K562 (cell line): ENCODE measurements at regions of chr1 and their contacts with region 1.

Region 1: DNA sequence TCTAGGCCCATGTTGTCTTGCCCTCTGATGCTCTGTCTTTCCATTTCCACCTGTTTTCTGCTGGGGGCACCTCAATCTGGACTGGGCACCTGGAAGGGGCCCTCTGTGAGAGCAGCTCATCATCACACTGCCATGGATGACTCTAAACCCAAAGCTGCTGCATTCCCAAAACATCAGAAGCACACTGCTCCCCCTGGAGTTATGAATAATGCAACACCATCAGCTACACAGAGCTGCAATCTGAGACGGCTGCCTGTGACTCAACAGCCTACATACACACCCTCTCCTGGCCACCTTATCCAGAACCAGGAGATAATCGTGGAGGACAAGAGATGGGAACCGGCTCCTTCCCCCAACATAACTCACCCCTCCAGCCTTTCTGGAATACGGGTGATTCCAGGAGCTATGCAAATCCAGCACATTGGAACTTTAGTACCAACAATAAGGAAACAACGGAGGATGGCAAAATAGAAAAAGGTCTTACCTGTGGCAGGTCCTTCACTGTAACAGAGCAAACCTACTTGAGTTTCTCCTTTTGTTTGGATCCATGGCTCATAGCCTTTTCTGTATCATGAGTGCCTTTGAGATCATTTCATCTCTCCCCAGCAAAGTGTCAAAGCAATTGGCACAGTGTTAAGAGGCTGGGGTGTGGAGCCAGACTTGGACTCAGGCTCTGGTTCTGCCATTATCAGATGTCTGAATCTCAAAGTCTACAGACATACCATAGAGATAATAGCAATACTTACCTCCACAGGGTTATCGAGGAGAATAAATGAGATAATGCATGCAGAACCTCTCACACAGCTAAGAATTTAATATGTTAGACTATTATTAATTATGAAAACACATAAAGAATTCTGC is 29.3 kb downstream of the AK2 start:
- DNase-seq: peak; percentile 38 to 69 (median 48)
- ATAC-seq: peak; percentile 70
- H3K4me3 ChIP-seq: no peak overlapping the region
- H3K27ac ChIP-seq: no peak overlapping the region
- H3K4me1 ChIP-seq: peaks cover 7 to 75% of the 10 kb centered on the region in 2 experiments
- H3K27me3 ChIP-seq: no peaks in the 10 kb centered on the region
- CTCF ChIP-seq: peak; percentile 56 to 66 (median 66)
- EP300 ChIP-seq: no peak
- POLR2A ChIP-seq: no peak
- RAD21 ChIP-seq: peak; percentile 60 to 64

Region 2: DNA sequence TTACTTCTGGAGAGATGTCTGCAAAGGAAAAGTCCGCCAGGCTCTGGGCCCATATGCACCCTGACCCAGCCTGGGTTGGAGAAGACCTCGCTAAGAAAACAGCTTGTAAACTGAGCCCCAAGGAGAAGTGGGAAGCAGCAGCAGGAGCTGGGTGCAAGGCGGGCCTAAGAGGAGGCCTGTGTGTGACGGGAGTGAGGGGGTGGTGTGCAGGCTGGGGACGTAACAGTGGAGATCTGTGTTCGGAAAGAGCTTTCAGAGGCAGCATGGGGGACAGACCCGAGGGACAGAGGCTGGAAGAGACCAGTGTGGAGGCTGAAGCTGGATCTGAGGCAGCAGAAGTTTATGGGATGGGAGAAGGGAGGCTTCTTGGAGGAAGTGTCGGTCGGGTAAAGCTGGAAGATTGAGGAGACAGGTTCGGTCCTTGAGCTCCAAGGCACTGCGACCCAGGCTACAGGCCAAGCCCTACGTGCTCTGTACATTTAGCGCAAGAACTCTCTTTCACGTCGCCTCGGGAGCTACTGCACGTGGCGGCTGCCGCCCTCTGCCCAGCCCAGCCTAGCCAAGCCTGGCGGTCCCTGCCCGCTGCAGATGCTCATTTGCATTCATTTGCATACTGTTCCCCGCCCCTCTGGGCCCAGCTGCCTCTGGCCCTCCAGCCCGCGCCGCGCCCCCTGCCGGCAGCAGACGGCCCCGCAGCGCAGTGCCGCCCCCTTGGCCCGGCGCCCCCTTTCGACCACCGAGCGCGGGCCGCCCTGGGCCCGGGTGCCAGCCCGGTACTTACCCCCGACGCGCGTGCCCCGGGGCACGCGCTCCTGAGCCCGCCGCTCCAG is 114.8 kb before region 1 on chr1:
- CTCF ChIA-PET with region 1: interaction called, 18 read pairs
- POLR2A ChIA-PET with region 1: interaction called, 3 read pairs
- in situ Hi-C with region 1: no loop called
- intact Hi-C with region 1: no loop called
- DNase-seq: peak; percentile 78 to 88 (median 85)
- ATAC-seq: peak; percentile 94
- H3K4me3 ChIP-seq: peak overlapping the region; percentile 42
- H3K27ac ChIP-seq: no peak overlapping the region
- H3K4me1 ChIP-seq: peaks cover 5 to 18% of the 10 kb centered on the region in 2 experiments; a peak in 3 of 5 replicates
- H3K27me3 ChIP-seq: peaks cover 5 to 67% of the 10 kb centered on the region in 2 experiments; a peak in 3 of 5 replicates
- CTCF ChIP-seq: peak; percentile 75 to 99 (median 94)
- EP300 ChIP-seq: no peak
- POLR2A ChIP-seq: no peak
- RAD21 ChIP-seq: peak in 1 of 2 experiments; percentile 55; a peak in 2 of 4 replicates

Region 3: DNA sequence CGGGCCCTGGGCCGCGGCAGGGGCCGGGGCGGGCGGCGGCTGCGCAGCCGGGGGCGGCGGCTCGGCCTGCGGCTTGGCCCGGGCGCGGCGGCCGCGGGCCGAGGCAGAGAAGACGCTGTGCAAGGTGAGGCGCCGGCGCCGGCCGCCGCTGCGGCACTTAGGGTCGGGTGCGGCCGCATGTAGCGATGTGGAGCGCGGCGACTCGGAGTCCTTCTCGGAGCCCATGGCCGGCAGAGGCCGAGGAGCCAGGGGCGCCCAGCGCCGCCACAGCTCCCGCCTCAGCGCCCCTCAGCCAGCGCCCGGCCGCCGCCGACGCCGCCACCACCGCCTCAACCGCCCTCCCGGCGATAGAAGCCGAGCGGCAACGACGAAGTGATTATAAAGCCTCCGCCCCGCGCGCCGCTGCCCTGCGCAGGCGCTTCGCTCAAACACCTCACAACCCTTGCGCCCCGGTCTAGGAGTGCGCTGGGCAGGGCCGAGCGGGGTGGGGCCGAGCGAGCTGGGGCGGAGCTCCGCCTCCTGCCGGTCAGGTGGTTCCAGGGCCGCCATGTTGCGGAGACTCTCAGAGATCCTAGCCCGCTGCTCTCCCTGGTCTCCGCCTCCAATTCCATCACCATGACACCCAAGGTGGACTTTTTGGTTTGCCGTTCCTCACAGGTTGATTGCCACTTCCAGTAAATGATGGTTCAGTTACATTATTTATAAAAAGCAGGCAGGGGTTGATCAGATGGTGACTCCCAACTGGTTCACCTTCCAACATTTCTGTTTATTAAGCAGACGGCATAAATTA is 42.8 kb before region 1 on chr1 and contains the start of gene RNF19B:
- CTCF ChIA-PET with region 1: no interaction called
- POLR2A ChIA-PET with region 1: interaction called, 10 read pairs
- in situ Hi-C with region 1: no loop called
- intact Hi-C with region 1: loop called (anchors 5 kb)
- DNase-seq: peak; percentile 98 to 99 (median 99)
- ATAC-seq: peak; percentile 98
- H3K4me3 ChIP-seq: peak within 1 kb of the TSS; percentile 63
- H3K27ac ChIP-seq: peak within 1 kb of the TSS; percentile 77
- H3K4me1 ChIP-seq: peaks cover 28 to 36% of the 10 kb centered on the region in 2 experiments
- H3K27me3 ChIP-seq: no peaks in the 10 kb centered on the region
- CTCF ChIP-seq: no peak
- EP300 ChIP-seq: no peak
- POLR2A ChIP-seq: peak; percentile 89
- RAD21 ChIP-seq: peak in 1 of 2 experiments; percentile 19; a peak in 1 of 4 replicates
- polyA plus RNA-seq, gene RNF19B: 2.6 to 2.8 TPM

Region 4: DNA sequence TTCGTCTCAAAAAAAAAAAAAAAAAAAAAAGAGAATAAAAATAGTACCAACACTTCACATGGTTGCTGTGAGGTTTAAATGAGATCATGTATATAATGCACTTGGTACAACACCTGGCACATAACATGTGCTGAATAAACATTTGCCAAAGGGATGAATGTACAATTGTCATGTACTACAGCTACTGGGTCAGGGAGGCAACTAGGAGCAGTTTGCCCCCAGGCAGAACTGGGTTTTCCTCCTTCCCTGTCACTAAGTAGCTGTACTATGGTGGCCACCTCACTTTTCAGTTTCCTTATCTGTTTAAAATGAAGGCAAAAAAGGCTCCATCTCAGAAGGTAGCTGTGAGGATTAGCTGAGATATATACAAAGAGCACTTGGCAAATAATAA is 17.8 kb after region 1 on chr1:
- CTCF ChIA-PET with region 1: no interaction called
- POLR2A ChIA-PET with region 1: interaction called, 28 read pairs
- in situ Hi-C with region 1: no loop called
- intact Hi-C with region 1: no loop called
- DNase-seq: no peak
- ATAC-seq: no peak
- H3K4me3 ChIP-seq: no peak overlapping the region
- H3K27ac ChIP-seq: no peak overlapping the region
- H3K4me1 ChIP-seq: peaks cover 11 to 19% of the 10 kb centered on the region in 2 experiments
- H3K27me3 ChIP-seq: no peaks in the 10 kb centered on the region
- CTCF ChIP-seq: no peak
- EP300 ChIP-seq: no peak
- POLR2A ChIP-seq: no peak; the same call in 1 of the 2 replicates
- RAD21 ChIP-seq: no peak

Region 5: DNA sequence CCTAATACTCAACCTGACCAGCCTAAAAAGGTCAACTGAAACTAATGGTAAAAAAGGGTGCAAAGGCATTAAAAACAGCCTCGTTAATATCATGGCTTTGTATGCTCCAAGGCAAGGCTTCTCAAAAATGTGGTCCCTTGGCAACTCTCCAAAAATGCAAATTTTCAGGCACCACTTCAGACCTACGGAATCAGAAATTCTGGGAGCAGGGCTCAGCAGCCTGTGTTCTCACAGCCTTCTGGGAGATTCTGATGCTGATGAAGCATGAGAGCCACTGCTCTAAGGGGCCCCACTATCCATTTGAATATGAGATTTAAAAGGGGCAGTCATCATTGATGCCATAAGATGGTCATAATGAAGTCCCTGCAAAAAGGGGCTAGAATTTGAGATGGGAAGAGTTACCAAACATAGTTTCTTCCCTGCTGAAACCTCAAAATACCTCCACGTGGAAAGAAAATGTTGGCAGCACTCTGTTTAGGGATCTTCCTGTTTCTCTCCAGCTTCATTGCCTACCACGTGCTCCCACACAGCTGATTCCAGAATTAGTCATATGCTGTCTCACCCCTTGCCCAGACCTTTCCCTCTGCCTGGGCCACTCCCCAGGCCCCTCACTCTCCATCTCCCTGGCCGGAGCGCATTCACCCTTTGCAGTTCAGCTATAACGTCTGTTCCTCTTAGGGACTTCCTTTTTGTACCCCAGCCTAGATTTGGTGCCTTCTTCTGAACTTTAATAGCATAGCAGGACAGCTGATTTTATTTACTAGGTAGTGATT is 376.8 kb after region 1 on chr1:
- CTCF ChIA-PET with region 1: no interaction called
- POLR2A ChIA-PET with region 1: no interaction called
- in situ Hi-C with region 1: no loop called
- intact Hi-C with region 1: no loop called
- DNase-seq: no peak
- ATAC-seq: no peak
- H3K4me3 ChIP-seq: no peak overlapping the region
- H3K27ac ChIP-seq: no peak overlapping the region
- H3K4me1 ChIP-seq: no peaks in the 10 kb centered on the region
- H3K27me3 ChIP-seq: peaks cover 11 to 14% of the 10 kb centered on the region in 2 experiments; a peak in 3 of 5 replicates
- CTCF ChIP-seq: no peak
- EP300 ChIP-seq: no peak
- POLR2A ChIP-seq: no peak
- RAD21 ChIP-seq: no peak